Right cardiac atrium (tissue), 5 donors: ENCODE measurements at regions of chr6 and their contacts with region 1.

Region 1: GRCh38 chr6:121430514-121431460 is 4.7 kb upstream of the GJA1 start:
- DNase-seq: no peak
- ATAC-seq: no peak
- H3K4me3 ChIP-seq: peak overlapping the region; percentile 25
- H3K27ac ChIP-seq: no peak overlapping the region
- H3K4me1 ChIP-seq: no peaks in the 10 kb centered on the region
- H3K27me3 ChIP-seq: no peaks in the 10 kb centered on the region

Region 2: GRCh38 chr6:121365536-121366521 is 65.0 kb before region 1 on chr6:
- intact Hi-C with region 1: no loop called
- DNase-seq: no peak
- ATAC-seq: no peak
- H3K4me3 ChIP-seq: no peak overlapping the region
- H3K27ac ChIP-seq: no peak overlapping the region
- H3K4me1 ChIP-seq: no peaks in the 10 kb centered on the region
- H3K27me3 ChIP-seq: no peaks in the 10 kb centered on the region

Region 3: DNA sequence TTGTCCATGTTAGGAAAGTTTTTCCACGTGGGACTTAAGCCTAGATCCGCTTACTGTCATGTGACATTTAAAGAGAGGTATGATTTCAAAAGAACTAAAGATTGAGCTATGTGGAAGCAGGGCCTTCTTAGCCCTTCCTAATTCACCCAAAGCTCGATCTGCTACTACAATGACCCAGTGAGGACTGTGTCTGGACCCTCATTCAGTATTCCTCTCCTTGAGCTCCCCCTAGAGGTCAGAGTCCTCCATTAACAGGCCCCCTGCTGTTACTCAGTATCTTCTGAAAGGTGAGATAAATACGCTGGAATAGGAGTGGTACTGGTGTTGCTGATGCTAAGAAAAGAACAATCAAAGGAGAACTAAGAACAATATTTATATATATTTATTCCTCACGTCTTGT is 418.7 kb after region 1 on chr6:
- intact Hi-C with region 1: loop called (anchors 2 to 10 kb)
- DNase-seq: peak in 1 of 3 donors; percentile 47
- ATAC-seq: peak; percentile 90 to 94
- H3K4me3 ChIP-seq: no peak overlapping the region
- H3K27ac ChIP-seq: no peak overlapping the region
- H3K4me1 ChIP-seq: peaks cover 5% of the 10 kb centered on the region
- H3K27me3 ChIP-seq: no peaks in the 10 kb centered on the region

Region 4: GRCh38 chr6:122008101-122008999 is 577.6 kb after region 1 on chr6:
- intact Hi-C with region 1: loop called in 1 of 4 experiments (anchors 10 kb)
- DNase-seq: peak; percentile 23 to 59 (median 30)
- ATAC-seq: peak; percentile 96
- H3K4me3 ChIP-seq: no peak overlapping the region
- H3K27ac ChIP-seq: no peak overlapping the region
- H3K4me1 ChIP-seq: peaks cover 1% of the 10 kb centered on the region
- H3K27me3 ChIP-seq: no peaks in the 10 kb centered on the region

Region 5: DNA sequence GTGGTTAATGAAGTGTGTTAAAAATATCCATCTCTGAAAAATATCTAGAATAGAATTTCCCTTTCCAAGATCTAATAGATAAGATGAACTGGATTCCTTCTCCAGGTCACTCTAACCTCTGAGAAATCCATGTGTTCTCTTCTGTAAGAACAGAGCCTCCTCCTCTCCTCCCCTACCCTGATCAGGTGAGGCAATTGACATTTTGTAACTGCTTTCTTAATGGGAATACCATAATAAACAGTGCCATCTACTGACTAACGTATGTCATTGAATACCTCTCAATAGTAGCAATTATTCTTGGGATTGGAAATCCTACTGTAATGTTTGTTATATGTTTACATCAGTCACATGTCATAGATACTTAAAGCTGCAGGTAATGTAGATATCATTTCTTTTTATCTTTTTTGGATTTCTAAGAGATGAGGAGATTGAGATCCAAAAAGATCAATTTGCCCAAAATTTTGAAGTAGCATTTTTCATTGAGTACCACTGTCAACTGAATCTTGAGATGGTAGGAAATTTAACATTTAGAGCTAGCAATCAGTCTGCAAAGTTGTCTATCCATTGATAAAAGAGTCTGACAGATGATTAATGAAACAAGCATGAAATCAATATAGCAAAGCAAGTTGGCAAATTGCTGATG is 602.9 kb after region 1 on chr6:
- intact Hi-C with region 1: loop called (anchors 5 to 10 kb)
- DNase-seq: no peak
- ATAC-seq: peak; percentile 78 to 85
- H3K4me3 ChIP-seq: no peak overlapping the region
- H3K27ac ChIP-seq: no peak overlapping the region
- H3K4me1 ChIP-seq: no peaks in the 10 kb centered on the region
- H3K27me3 ChIP-seq: no peaks in the 10 kb centered on the region

Region 6: GRCh38 chr6:122129313-122130025 is 698.7 kb after region 1 on chr6:
- intact Hi-C with region 1: loop called in 1 of 4 experiments (anchors 5 kb)
- DNase-seq: no peak
- ATAC-seq: peak; percentile 10 to 39
- H3K4me3 ChIP-seq: no peak overlapping the region
- H3K27ac ChIP-seq: peak overlapping the region; percentile 54
- H3K4me1 ChIP-seq: no peaks in the 10 kb centered on the region
- H3K27me3 ChIP-seq: no peaks in the 10 kb centered on the region

Region 7: DNA sequence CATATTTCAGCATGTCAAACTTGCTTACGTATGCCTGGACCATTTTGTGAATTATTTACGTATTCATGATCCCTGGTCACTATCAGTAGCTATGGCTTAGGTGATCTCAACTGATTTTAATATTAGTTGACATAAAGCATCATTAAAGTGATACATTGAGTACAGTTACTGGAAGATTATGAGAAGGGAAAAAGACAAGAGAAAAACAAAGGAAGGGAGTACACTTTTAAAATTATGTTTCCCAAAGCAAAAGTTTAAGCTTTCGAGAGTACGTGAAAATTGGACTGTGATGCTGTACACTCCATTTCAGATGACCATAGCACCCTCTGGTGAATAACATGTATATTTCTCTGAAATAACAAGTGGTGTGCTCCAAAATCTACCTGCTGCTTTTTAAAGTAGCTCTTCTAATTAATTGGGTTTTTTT is 753.6 kb after region 1 on chr6:
- intact Hi-C with region 1: loop called (anchors 5 kb)
- DNase-seq: no peak
- ATAC-seq: peak; percentile 63 to 75
- H3K4me3 ChIP-seq: peak overlapping the region; percentile 48
- H3K27ac ChIP-seq: no peak overlapping the region
- H3K4me1 ChIP-seq: no peaks in the 10 kb centered on the region
- H3K27me3 ChIP-seq: no peaks in the 10 kb centered on the region